Mammary epithelial cell (primary cell): ENCODE measurements at regions of chr19 and their contacts with region 1.

Region 1: DNA sequence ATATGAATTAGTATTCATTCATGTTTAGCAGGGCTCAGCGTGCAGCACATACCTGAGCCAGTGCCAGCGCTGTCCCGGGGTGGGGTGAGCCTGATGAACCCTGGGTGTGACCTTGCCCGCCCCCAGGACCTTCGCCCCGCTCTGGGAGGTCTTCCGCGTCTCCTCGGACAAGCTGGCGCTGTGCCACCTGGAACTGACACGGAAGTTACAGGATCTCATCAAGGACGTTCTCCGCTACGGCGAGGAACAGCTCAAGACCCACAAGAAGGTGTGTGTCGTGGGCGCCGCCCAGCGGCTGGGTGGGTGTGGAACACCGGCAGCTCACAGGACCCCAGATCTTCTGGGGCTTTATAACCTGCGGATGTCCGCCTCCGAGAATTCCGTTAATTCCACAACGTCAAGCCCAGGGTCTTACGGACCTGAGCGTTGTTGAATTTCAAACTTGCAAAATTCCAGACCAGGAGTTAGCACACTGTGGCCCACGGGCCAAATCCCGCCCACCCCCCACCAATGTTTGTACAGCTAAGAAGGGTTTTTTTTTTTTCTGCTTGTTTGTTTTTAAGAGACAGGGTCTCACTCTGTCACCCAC is 15.4 kb downstream of the FCHO1 start:
- DNase-seq: peak; percentile 68
- H3K4me3 ChIP-seq: peak overlapping the region; percentile 1 to 49 (median 40)
- H3K27ac ChIP-seq: no peak overlapping the region
- H3K4me1 ChIP-seq: peaks cover 5% of the 10 kb centered on the region
- H3K27me3 ChIP-seq: no peaks in the 10 kb centered on the region
- CTCF ChIP-seq: peak; percentile 86 to 99

Region 2: DNA sequence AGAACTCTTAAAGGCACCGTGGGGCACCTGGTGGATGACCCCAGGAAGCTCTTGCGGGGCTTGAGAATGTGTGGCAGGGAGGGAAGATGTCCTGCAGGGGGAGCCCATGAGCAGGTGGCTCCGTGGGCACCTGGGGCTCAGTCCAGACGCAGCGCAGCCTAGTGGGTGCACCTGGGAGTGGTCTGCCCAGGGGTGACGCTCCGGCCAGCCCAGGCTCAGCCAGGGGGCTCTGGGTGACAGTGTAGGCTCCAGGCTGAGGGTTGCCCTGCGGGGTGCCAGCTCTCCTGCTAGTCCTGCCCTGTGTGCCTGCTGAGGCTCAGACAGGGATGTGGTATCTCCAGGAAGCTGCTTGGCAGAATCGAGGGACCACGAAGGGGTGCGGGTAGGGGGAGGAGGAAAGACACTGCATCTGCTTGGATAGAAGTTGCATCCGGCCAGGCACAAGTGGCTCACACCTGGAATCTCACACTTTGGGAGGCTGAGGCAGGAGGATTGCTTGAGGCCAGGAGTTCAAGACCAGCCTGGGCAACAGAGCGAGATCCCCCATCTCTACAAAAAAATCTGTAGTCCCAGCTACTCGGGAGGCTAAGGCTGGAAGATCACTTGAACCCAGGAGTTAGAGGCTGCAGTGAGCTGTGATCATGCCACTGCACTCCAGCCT is 270.2 kb before region 1 on chr19:
- CTCF ChIA-PET with region 1: no interaction called
- dilution Hi-C with region 1: no loop called
- in situ Hi-C with region 1: no loop called
- intact Hi-C with region 1: loop called (anchors 5 kb)
- DNase-seq: peak; percentile 56
- H3K4me3 ChIP-seq: no peak overlapping the region
- H3K27ac ChIP-seq: no peak overlapping the region
- H3K4me1 ChIP-seq: peaks cover 9% of the 10 kb centered on the region
- H3K27me3 ChIP-seq: no peaks in the 10 kb centered on the region
- CTCF ChIP-seq: peak; percentile 95 to 98

Region 3: GRCh38 chr19:17605761-17606745 is 160.6 kb before region 1 on chr19:
- CTCF ChIA-PET with region 1: no interaction called
- dilution Hi-C with region 1: no loop called
- in situ Hi-C with region 1: no loop called
- intact Hi-C with region 1: loop called (anchors 5 kb)
- DNase-seq: peak; percentile 77
- H3K4me3 ChIP-seq: peak overlapping the region in 2 of 3 experiments; percentile 8 to 36
- H3K27ac ChIP-seq: no peak overlapping the region
- H3K4me1 ChIP-seq: peaks cover 6% of the 10 kb centered on the region
- H3K27me3 ChIP-seq: peaks cover 4% of the 10 kb centered on the region
- CTCF ChIP-seq: peak; percentile 40 to 62

Region 4: GRCh38 chr19:17703824-17704463 is 62.7 kb before region 1 on chr19:
- CTCF ChIA-PET with region 1: interaction called, 8 read pairs
- dilution Hi-C with region 1: no loop called
- in situ Hi-C with region 1: loop called in 1 of 2 experiments (anchors 10 kb)
- intact Hi-C with region 1: loop called (anchors 1 kb)
- DNase-seq: peak; percentile 32
- H3K4me3 ChIP-seq: no peak overlapping the region
- H3K27ac ChIP-seq: no peak overlapping the region
- H3K4me1 ChIP-seq: no peaks in the 10 kb centered on the region
- H3K27me3 ChIP-seq: no peaks in the 10 kb centered on the region
- CTCF ChIP-seq: peak; percentile 59 to 83

Region 5: DNA sequence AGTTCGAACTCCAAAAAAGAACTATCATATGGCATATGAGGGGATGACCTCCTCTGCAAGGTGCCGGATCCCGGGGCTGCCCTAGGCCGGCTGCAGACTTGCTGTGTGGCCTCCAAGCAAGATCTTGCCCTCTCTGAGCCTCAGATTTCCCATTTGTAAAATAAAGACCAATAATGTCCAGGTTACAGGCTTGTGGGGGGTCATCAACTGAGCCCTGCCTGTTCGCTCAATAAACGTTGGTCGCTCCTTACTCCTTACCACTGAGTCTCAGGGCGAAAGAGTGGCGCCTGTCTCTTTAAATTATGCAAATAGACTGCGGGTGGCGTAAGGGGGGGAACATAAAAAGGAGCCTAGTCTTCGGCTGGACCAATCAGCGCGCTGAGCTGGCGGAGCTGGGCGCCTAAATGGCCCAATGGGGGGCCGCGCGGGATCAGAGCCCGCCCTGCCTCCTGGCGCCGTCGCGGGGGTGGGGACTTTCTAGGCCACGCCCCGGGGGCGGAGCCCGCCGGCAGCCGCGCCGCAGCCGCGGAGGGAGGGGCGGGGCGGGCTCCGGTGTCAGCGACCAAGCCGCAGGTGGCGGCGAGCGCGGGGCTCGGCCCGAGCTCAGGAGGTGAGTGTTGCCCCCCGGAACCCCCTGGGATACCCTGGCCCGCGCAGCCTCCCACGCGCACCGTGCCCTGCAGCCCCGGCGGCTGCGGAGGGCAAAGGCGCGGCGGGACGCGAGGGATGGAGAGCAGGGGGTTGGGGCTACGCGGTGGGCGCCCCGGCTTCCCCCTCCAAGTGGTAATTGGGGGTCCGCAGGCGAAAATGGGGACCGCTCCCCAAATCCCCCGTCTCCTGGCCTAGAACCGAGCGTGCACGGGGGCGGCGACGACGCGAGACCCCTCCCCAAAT is 19.2 kb before region 1 on chr19:
- CTCF ChIA-PET with region 1: no interaction called
- dilution Hi-C with region 1: no loop called
- in situ Hi-C with region 1: no loop called
- intact Hi-C with region 1: no loop called
- DNase-seq: peak; percentile 87
- H3K4me3 ChIP-seq: peak overlapping the region; percentile 33 to 42 (median 37)
- H3K27ac ChIP-seq: no peak overlapping the region
- H3K4me1 ChIP-seq: no peaks in the 10 kb centered on the region
- H3K27me3 ChIP-seq: no peaks in the 10 kb centered on the region
- CTCF ChIP-seq: no peak